ENCODE measurements at regions of chr7 and their contacts with region 1.

Region 1: DNA sequence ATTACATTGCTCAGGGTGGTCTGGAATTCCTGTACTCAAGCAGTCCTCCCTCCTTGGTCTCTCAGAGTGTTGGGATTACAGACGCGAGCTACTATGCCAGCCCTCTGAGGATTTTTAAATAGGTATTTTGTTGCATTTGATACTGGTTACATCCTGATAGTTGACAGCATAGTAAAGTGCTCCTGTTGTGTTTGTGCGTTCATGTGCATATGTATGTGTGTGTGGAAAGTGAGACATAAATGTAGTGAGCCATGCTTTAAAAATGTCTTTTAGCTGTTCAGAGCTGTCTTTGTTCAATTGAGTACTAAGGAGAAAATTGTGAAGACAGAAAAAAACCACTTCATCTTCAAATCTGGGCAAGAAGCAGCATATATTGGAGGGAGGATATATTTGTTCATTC is 27.8 kb downstream of the ZNRF2 start:
- DNase-seq: no peak
- H3K4me3 ChIP-seq: no peak overlapping the region
- H3K27ac ChIP-seq: no peak overlapping the region
- H3K4me1 ChIP-seq: peaks cover 0 to 10% (median 4%) of the 10 kb centered on the region in 4 experiments; a peak in 3 of 7 replicates
- H3K27me3 ChIP-seq: no peaks in the 10 kb centered on the region
- CTCF ChIP-seq: no peak
- EP300 ChIP-seq: no peak
- POLR2A ChIP-seq: no peak
- RAD21 ChIP-seq: no peak

Region 2: GRCh38 chr7:30301751-30302150 is 10.4 kb before region 1 on chr7:
- CTCF ChIA-PET with region 1: interaction called, 26 read pairs
- POLR2A ChIA-PET with region 1: interaction called, 3 read pairs
- DNase-seq: no peak
- H3K4me3 ChIP-seq: no peak overlapping the region
- H3K27ac ChIP-seq: no peak overlapping the region
- H3K4me1 ChIP-seq: peaks cover 0 to 4% (median 0%) of the 10 kb centered on the region in 4 experiments; a peak in 2 of 7 replicates
- H3K27me3 ChIP-seq: no peaks in the 10 kb centered on the region
- CTCF ChIP-seq: no peak
- EP300 ChIP-seq: no peak
- POLR2A ChIP-seq: no peak
- RAD21 ChIP-seq: no peak

Region 3: GRCh38 chr7:30330134-30331111 is 18.2 kb after region 1 on chr7:
- CTCF ChIA-PET with region 1: no interaction called
- POLR2A ChIA-PET with region 1: no interaction called
- DNase-seq: no peak
- H3K4me3 ChIP-seq: no peak overlapping the region
- H3K27ac ChIP-seq: no peak overlapping the region
- H3K4me1 ChIP-seq: no peaks in the 10 kb centered on the region
- H3K27me3 ChIP-seq: no peaks in the 10 kb centered on the region
- CTCF ChIP-seq: no peak
- EP300 ChIP-seq: no peak
- POLR2A ChIP-seq: no peak
- RAD21 ChIP-seq: no peak

Measured in H1 (cell line).